Activated naive CD4-positive, alpha-beta T cell treated with anti-CD3 and anti-CD28 coated beads for 36 hours (primary cell): ENCODE measurements at regions of chr1 and their contacts with region 1.

Region 1: GRCh38 chr1:64223329-64224151 is 20.1 kb downstream of the UBE2U start:
- DNase-seq: no peak
- H3K4me3 Mint-ChIP-seq: no peak overlapping the region
- H3K27ac Mint-ChIP-seq: peak overlapping the region; percentile 22
- H3K4me1 Mint-ChIP-seq: peaks cover 11% of the 10 kb centered on the region
- H3K27me3 Mint-ChIP-seq: peaks cover 14% of the 10 kb centered on the region

Region 2: GRCh38 chr1:64171797-64172281 is 51.7 kb before region 1 on chr1:
- CTCF ChIA-PET with region 1: no interaction called
- intact Hi-C with region 1: loop called (anchors 5 kb)
- DNase-seq: no peak
- H3K4me3 Mint-ChIP-seq: no peak overlapping the region
- H3K27ac Mint-ChIP-seq: no peak overlapping the region
- H3K4me1 Mint-ChIP-seq: peaks cover 24% of the 10 kb centered on the region
- H3K27me3 Mint-ChIP-seq: peaks cover 7% of the 10 kb centered on the region